ENCODE measurements at regions of chr6 and their contacts with region 1.

Region 1: DNA sequence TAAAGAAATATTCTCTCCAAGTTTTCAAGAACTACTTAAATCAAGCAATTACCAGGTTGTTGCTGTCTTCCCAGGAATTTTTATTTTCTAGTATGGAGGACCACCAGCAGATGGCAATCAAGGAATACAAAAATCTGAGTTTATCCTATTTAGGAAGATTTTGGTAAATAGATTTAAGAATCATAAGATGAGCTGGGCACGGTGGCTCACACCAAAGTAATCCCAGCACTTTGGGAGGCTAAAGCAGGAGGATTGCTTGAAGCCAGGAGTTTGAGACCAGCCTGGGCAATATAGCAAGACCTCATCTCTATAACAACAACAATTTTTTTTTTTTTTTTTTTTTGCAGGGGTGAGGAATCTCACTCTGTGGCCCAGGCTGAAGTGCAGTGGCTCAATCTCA is 19.3 kb upstream of the SEC63 start:
- DNase-seq: peak; percentile 39
- ATAC-seq: peak; percentile 49; the same call in 1 of the 2 replicates
- H3K4me3 ChIP-seq: no peak overlapping the region
- H3K27ac ChIP-seq: no peak overlapping the region
- H3K4me1 ChIP-seq: no peaks in the 10 kb centered on the region
- H3K27me3 ChIP-seq: peaks cover 3% of the 10 kb centered on the region
- CTCF ChIP-seq: peak; percentile 47
- POLR2A ChIP-seq: no peak
- RAD21 ChIP-seq: peak; percentile 37; the same call in 1 of the 2 replicates

Region 2: DNA sequence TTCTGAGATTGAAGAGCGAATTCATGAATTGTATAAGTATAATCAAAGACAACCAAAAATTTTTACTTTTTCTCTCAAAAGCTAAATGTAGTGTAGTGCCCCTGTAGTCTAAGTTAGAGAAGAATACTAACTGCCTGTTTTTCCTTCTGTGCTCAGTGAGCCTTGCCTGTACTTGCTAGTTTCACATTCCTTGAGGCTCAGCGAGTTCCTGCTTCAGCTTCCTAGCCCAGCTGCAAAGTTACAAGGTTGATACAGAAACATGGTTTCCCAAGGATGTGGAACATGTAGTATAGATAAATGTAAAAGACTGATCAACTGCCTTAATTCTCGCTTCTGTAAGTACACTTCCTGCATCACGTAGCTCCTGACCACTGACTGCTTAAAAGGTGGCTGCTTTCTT is 13.8 kb after region 1 on chr6:
- CTCF ChIA-PET with region 1: interaction called, 16 read pairs
- POLR2A ChIA-PET with region 1: no interaction called
- dilution Hi-C with region 1: no loop called
- in situ Hi-C with region 1: no loop called
- intact Hi-C with region 1: no loop called
- DNase-seq: no peak
- ATAC-seq: no peak
- H3K4me3 ChIP-seq: no peak overlapping the region
- H3K27ac ChIP-seq: no peak overlapping the region
- H3K4me1 ChIP-seq: no peaks in the 10 kb centered on the region
- H3K27me3 ChIP-seq: no peaks in the 10 kb centered on the region; the same call in none of the 2 replicates
- CTCF ChIP-seq: no peak
- POLR2A ChIP-seq: no peak
- RAD21 ChIP-seq: no peak

Region 3: GRCh38 chr6:108052706-108053105 is 75.4 kb after region 1 on chr6:
- CTCF ChIA-PET with region 1: interaction called, 11 read pairs
- POLR2A ChIA-PET with region 1: no interaction called
- dilution Hi-C with region 1: no loop called
- in situ Hi-C with region 1: no loop called
- intact Hi-C with region 1: loop called (anchors 1 kb)
- DNase-seq: no peak
- ATAC-seq: no peak
- H3K4me3 ChIP-seq: no peak overlapping the region
- H3K27ac ChIP-seq: no peak overlapping the region
- H3K4me1 ChIP-seq: no peaks in the 10 kb centered on the region
- H3K27me3 ChIP-seq: no peaks in the 10 kb centered on the region
- CTCF ChIP-seq: no peak
- POLR2A ChIP-seq: no peak
- RAD21 ChIP-seq: no peak

Region 4: GRCh38 chr6:108294297-108294726 is 317.0 kb after region 1 on chr6:
- CTCF ChIA-PET with region 1: no interaction called
- POLR2A ChIA-PET with region 1: no interaction called
- dilution Hi-C with region 1: no loop called
- in situ Hi-C with region 1: no loop called
- intact Hi-C with region 1: no loop called
- DNase-seq: no peak
- ATAC-seq: peak; percentile 4; the same call in 1 of the 2 replicates
- H3K4me3 ChIP-seq: peak overlapping the region; percentile 75
- H3K27ac ChIP-seq: peak overlapping the region; percentile 95
- H3K4me1 ChIP-seq: no peaks in the 10 kb centered on the region
- H3K27me3 ChIP-seq: no peaks in the 10 kb centered on the region
- CTCF ChIP-seq: no peak
- POLR2A ChIP-seq: no peak
- RAD21 ChIP-seq: no peak

Region 5: DNA sequence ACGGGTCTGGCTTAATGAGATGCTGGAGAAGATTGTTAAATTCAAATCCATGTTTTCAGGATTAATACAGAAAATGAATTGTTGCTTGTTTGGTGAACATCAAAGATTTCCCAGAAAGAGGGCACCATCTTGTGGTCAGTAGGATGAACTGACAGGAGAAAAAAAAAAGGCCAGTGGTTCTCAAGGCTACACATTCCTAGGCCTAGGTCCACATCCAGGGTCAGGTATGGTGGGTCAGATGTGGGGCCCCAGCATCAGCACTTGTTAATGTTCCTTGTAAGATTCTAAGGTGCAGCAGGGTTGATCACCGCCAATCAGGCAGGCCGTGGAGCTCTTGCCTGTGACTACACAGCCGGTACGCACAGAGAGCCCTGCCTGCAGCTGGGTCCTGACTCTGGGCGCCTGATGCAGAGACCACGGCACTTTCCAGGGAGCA is 549.5 kb after region 1 on chr6:
- CTCF ChIA-PET with region 1: no interaction called
- POLR2A ChIA-PET with region 1: no interaction called
- dilution Hi-C with region 1: no loop called
- in situ Hi-C with region 1: no loop called
- intact Hi-C with region 1: loop called (anchors 2 kb)
- DNase-seq: peak; percentile 62
- ATAC-seq: peak; percentile 63
- H3K4me3 ChIP-seq: no peak overlapping the region
- H3K27ac ChIP-seq: no peak overlapping the region
- H3K4me1 ChIP-seq: peaks cover 2% of the 10 kb centered on the region; the same call in 1 of the 2 replicates
- H3K27me3 ChIP-seq: peaks cover 11% of the 10 kb centered on the region
- CTCF ChIP-seq: peak; percentile 88
- POLR2A ChIP-seq: peak; percentile 33; the same call in 1 of the 2 replicates
- RAD21 ChIP-seq: peak; percentile 91